Activated T-helper 1 cell treated with anti-CD3 and anti-CD28 coated beads, Interleukin-12 subunit alpha, Interleukin-12 subunit beta, Interleukin-2, Interleukin-4 antibody, amounts not matched to agents 30 ng/mL and 10 ng/mL and 1 ng/mL, durations not matched to agents 14 hours and 24 hours and 36 hours (primary cell): ENCODE measurements at regions of chr1 and their contacts with region 1.

Region 1: GRCh38 chr1:53485478-53486394 is 26.5 kb downstream of the DMRTB1 start:
- DNase-seq: peak; percentile 49
- H3K4me3 Mint-ChIP-seq: no peak overlapping the region
- H3K27ac Mint-ChIP-seq: no peak overlapping the region
- H3K4me1 Mint-ChIP-seq: peaks cover 5% of the 10 kb centered on the region
- H3K27me3 Mint-ChIP-seq: peaks cover 20% of the 10 kb centered on the region

Region 2: DNA sequence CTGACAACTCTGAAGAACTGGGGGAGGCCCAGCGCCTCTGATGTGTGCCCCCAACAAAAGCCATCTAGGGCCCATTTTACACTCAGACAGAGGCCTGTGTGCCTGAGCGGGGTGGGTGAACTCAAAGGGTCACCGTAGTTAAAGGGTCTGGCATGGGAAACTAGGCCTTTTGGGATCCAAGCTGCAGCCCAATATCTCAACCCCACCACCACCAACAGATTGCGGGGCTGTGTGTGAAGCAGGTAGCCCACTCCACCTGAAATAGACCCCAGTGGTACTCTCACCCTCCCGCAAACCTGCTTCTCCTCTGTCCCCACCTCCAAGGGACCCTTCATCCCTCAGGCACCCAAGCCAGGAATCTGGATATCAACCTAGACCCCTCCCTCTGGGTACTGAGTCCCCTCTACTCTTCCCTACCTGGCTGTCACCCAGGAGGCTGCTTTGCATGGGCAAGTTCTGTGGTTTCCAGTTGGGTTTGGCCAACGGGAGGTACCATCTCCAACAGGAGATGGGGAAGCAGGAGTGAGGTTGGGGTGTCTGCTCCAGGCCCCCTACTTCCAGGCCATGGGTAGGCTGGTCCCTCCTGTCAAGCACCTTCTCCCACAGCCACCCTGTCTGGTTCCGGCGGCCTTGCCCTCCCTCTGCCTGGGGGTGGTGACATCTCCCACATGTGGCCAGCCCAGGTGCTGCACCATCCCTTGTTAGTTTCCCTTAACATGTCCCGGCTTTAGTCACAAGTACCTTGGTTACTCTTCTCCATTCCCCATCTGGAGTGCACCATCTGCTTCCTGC is 122.7 kb before region 1 on chr1:
- intact Hi-C with region 1: no loop called
- DNase-seq: no peak
- H3K4me3 Mint-ChIP-seq: no peak overlapping the region
- H3K27ac Mint-ChIP-seq: peak overlapping the region; percentile 34
- H3K4me1 Mint-ChIP-seq: peaks cover 4% of the 10 kb centered on the region
- H3K27me3 Mint-ChIP-seq: peaks cover 21% of the 10 kb centered on the region

Region 3: DNA sequence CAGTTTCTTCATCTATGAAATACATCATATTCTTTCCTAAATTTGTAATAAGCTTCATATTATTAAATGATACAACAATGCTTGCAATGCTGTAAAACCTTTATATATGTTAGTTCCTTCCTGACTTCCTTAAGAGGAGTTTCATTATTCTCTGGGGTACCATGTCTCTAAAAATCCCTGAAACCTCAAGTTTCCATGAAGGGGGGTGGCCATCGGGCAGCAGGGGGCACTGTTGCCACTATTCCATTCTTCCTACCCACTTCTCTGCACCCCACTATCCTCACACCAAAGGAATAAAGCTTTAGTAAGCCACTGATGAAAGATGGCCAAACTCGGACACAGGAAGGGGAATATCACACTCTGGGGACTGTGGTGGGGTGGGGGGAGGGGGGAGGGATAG is 35.5 kb before region 1 on chr1:
- intact Hi-C with region 1: no loop called
- DNase-seq: no peak
- H3K4me3 Mint-ChIP-seq: no peak overlapping the region
- H3K27ac Mint-ChIP-seq: no peak overlapping the region
- H3K4me1 Mint-ChIP-seq: no peaks in the 10 kb centered on the region
- H3K27me3 Mint-ChIP-seq: peaks cover 24% of the 10 kb centered on the region

Region 4: GRCh38 chr1:53593758-53594380 is 108.1 kb after region 1 on chr1:
- intact Hi-C with region 1: loop called (anchors 2 kb)
- DNase-seq: no peak
- H3K4me3 Mint-ChIP-seq: no peak overlapping the region
- H3K27ac Mint-ChIP-seq: no peak overlapping the region
- H3K4me1 Mint-ChIP-seq: no peaks in the 10 kb centered on the region
- H3K27me3 Mint-ChIP-seq: peaks cover 4% of the 10 kb centered on the region

Region 5: GRCh38 chr1:53629101-53629691 is 143.5 kb after region 1 on chr1:
- intact Hi-C with region 1: no loop called
- DNase-seq: no peak
- H3K4me3 Mint-ChIP-seq: no peak overlapping the region
- H3K27ac Mint-ChIP-seq: no peak overlapping the region
- H3K4me1 Mint-ChIP-seq: no peaks in the 10 kb centered on the region
- H3K27me3 Mint-ChIP-seq: peaks cover 4% of the 10 kb centered on the region

Region 6: GRCh38 chr1:53681977-53682685 is 196.4 kb after region 1 on chr1:
- intact Hi-C with region 1: loop called (anchors 1 kb)
- DNase-seq: peak; percentile 8
- H3K4me3 Mint-ChIP-seq: no peak overlapping the region
- H3K27ac Mint-ChIP-seq: no peak overlapping the region
- H3K4me1 Mint-ChIP-seq: no peaks in the 10 kb centered on the region
- H3K27me3 Mint-ChIP-seq: peaks cover 11% of the 10 kb centered on the region

Region 7: GRCh38 chr1:53754484-53755312 is 269.0 kb after region 1 on chr1:
- intact Hi-C with region 1: loop called (anchors 1 kb)
- DNase-seq: no peak
- H3K4me3 Mint-ChIP-seq: no peak overlapping the region
- H3K27ac Mint-ChIP-seq: no peak overlapping the region
- H3K4me1 Mint-ChIP-seq: peaks cover 5% of the 10 kb centered on the region
- H3K27me3 Mint-ChIP-seq: peaks cover 4% of the 10 kb centered on the region